Caco-2 (cell line): ENCODE measurements at regions of chr3 and their contacts with region 1.

Region 1: GRCh38 chr3:193932136-193932535 is 203.8 kb upstream of the HES1 start:
- DNase-seq: no peak
- H3K4me3 ChIP-seq: no peak overlapping the region
- H3K4me3 Mint-ChIP-seq: no peak overlapping the region
- H3K27ac Mint-ChIP-seq: no peak overlapping the region
- H3K4me1 ChIP-seq: no peaks in the 10 kb centered on the region; the same call in 1 of the 2 replicates
- H3K4me1 Mint-ChIP-seq: no peaks in the 10 kb centered on the region
- H3K27me3 ChIP-seq: no peaks in the 10 kb centered on the region
- H3K27me3 Mint-ChIP-seq: no peaks in the 10 kb centered on the region
- CTCF ChIP-seq: no peak

Region 2: DNA sequence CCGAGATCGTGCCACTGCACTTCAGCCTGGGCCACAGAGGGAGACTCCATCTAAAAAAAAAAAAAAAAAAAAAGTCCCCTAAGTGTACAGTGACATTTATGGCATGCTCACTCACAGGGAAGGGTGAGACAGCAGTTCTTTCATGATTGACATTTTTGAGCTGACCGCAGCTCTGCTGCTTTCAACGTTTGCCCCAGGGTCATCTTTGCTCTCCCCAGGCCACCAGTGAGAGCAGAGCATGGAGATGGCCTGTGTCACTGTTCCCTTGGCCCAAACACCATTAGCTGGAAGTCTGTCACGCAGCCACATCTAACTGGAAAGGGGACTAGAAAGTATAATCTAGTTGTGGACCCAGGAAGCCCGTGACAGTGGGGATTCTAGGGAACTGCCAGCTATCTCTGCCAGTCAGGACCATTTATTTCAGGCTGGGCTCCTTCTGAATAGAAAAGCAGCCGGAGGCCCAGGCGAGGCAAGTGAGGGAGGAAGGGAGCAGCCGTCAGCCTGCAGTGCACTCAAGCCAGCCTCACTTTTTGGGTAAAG is 10.4 kb after region 1 on chr3:
- CTCF ChIA-PET with region 1: interaction called, 11 read pairs
- POLR2A ChIA-PET with region 1: interaction called, 5 read pairs
- intact Hi-C with region 1: no loop called
- DNase-seq: peak; percentile 20 to 54
- H3K4me3 ChIP-seq: no peak overlapping the region
- H3K4me3 Mint-ChIP-seq: no peak overlapping the region
- H3K27ac Mint-ChIP-seq: peak overlapping the region; percentile 32
- H3K4me1 ChIP-seq: peaks cover 22% of the 10 kb centered on the region
- H3K4me1 Mint-ChIP-seq: peaks cover 26% of the 10 kb centered on the region
- H3K27me3 ChIP-seq: no peaks in the 10 kb centered on the region
- H3K27me3 Mint-ChIP-seq: no peaks in the 10 kb centered on the region
- CTCF ChIP-seq: no peak